Common myeloid progenitor, CD34-positive (primary cell): ENCODE measurements at regions of chr5 and their contacts with region 1.

Region 1: DNA sequence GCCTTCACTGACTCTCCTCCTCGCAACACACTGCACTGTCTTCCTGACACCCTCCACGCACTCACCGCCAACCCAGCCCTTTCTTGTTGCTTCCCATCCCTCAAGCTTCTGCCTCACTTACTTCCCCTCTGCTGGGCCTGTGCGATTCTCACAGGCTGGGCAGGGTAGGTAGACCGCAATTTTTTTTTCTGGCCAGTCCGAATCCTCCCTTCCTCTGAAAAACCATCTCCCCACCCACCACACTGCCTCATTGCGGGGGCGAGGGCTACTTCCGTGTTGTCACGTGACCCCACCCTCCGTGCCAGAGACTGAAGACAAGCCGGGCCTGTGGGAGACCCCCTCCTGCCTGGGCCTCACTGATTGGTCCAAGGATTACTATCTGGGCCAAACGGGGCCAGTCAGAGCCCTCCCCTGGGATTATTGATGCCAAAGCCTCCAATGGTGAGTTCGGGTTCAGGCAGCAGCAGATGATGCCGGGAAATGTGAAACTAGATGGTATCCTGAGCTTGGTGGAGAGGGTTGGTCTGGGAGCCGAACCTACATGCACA is 73.1 kb downstream of the STK10 start:
- DNase-seq: peak; percentile 91 to 97 (median 95)
- H3K4me3 ChIP-seq: peak overlapping the region in 4 of 7 experiments; percentile 20 to 51 (median 41)
- H3K27ac ChIP-seq: peak overlapping the region; percentile 25 to 62
- H3K4me1 ChIP-seq: peaks cover 22 to 91% (median 72%) of the 10 kb centered on the region in 4 experiments
- H3K27me3 ChIP-seq: no peaks in the 10 kb centered on the region

Region 2: DNA sequence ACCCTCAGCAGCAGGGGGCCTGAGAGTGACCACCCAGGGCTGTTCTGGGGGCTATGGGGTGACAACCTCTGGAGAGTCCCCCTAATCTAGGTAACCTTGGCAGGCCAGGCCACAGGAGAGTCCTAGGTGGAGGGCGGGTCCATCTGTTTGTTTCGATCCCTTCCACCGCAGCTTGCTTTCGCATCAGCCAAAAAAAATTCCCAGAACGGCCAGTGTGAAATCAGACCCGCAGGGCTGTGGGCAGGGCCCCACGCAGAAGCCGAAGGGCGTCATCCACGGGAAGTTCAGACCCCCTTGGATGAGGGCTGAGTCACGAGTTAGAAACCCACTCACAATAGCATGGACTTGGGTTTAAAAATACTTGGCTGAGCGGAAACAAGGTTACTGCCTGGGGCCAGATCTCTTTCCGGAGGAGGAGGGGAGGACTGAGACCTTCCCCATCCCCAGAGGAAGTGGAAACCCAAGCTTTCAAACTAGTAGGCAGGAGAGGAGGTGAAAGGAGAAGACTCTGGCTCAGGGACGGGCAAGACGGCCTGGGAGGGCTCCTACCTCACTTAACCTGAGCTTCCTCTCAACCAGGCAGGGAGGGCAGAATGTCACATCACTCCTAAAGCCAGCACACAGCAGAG is 64.5 kb after region 1 on chr5:
- CTCF ChIA-PET with region 1: interaction called, 63 read pairs
- POLR2A ChIA-PET with region 1: interaction called, 17 read pairs
- DNase-seq: peak; percentile 85 to 89 (median 87)
- H3K4me3 ChIP-seq: peak overlapping the region in 6 of 7 experiments; percentile 19 to 71 (median 54)
- H3K27ac ChIP-seq: peak overlapping the region; percentile 77 to 88
- H3K4me1 ChIP-seq: peaks cover 38 to 95% (median 81%) of the 10 kb centered on the region in 4 experiments
- H3K27me3 ChIP-seq: no peaks in the 10 kb centered on the region